Activated CD4-positive, alpha-beta T cell treated with anti-CD3 and anti-CD28 coated beads, Interleukin-2, amount 10 ng/mL, durations not matched to agents 24 days and 14 days (primary cell): ENCODE measurements at regions of chr17 and their contacts with region 1.

Region 1: DNA sequence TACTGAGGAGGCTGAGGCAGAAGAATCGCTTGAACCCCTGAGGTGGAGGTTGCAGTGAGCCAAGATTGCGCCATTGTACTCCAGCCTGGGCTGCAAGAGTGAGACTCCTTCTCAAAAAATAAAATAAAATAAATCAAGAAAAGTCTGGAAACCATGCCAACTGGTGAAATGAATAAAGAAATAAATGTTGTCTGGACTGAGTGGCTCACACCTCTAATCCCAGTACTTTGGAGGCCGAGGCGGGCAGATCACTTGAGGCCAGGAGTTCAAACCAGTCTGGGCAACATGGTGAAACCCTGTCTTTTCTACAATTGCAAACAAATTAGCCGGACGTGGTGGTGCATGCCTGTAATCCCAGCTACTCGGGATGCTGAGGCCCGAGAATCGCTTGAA is 744 bp upstream of the LRRC37A3 start:
- DNase-seq: no peak
- H3K4me3 Mint-ChIP-seq: peak overlapping the region; percentile 86
- H3K27ac Mint-ChIP-seq: peak overlapping the region; percentile 91
- H3K4me1 Mint-ChIP-seq: peaks cover 14% of the 10 kb centered on the region
- H3K27me3 Mint-ChIP-seq: no peaks in the 10 kb centered on the region

Region 2: DNA sequence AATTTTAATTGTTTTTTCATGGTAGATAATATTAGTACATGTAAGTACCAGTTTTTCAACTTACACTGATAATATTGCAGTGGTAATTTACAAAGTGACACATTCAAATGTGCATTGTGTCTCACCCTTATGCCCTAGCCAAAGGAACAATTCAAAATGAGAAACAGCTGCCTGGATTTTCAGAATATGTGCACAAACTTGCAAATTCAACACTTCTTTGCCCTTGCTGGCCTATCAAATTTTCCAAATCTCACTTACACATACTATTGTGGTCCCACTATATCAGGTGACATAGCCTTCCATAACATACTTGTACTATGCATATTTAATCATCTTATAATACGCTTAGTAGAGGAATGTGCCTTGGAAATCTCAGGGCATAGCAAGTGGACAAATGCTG is 31.9 kb after region 1 on chr17:
- intact Hi-C with region 1: no loop called
- DNase-seq: no peak
- H3K4me3 Mint-ChIP-seq: no peak overlapping the region
- H3K27ac Mint-ChIP-seq: no peak overlapping the region
- H3K4me1 Mint-ChIP-seq: no peaks in the 10 kb centered on the region
- H3K27me3 Mint-ChIP-seq: peaks cover 5% of the 10 kb centered on the region

Region 3: GRCh38 chr17:64964796-64965195 is 44.8 kb after region 1 on chr17:
- intact Hi-C with region 1: loop called (anchors 5 kb)
- DNase-seq: peak; percentile 34
- H3K4me3 Mint-ChIP-seq: peak overlapping the region; percentile 49
- H3K27ac Mint-ChIP-seq: peak overlapping the region; percentile 51
- H3K4me1 Mint-ChIP-seq: peaks cover 49% of the 10 kb centered on the region
- H3K27me3 Mint-ChIP-seq: no peaks in the 10 kb centered on the region

Region 4: DNA sequence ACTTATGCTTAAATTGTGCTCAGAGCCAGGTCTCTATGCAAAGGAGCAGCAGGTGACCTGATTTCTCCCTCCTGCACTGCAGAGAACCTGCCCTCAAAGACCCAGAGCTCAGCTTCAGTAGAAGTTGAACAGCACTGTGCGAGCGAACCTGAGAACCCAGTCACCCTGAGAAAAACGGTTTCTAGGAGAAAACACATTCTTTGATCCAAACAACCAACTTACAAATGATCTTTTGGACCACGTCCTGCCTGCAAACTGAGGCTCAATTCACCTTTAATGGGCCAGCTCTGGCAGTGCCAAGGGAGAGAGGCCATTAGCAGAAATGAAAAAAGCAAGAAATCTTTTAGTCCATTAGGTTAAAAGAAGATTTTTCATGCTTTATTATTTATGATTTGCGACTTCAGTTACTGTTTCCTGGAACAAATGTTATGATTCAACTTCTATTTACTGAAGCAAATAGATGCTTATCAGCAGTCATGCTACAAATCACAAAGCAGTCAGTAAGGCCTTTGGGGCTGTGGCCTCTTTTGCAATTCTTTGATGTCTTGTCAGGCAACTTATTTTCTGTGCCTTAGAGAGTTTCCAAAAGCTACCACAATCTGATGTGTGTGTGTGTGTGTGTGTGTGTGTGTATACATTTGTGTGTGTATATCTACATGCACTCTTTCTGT is 65.0 kb after region 1 on chr17:
- intact Hi-C with region 1: no loop called
- DNase-seq: peak; percentile 88
- H3K4me3 Mint-ChIP-seq: peak overlapping the region; percentile 83
- H3K27ac Mint-ChIP-seq: peak overlapping the region; percentile 99
- H3K4me1 Mint-ChIP-seq: peaks cover 51% of the 10 kb centered on the region
- H3K27me3 Mint-ChIP-seq: no peaks in the 10 kb centered on the region